Psoas muscle (tissue), 8 donors: ENCODE measurements at regions of chr10 and their contacts with region 1.

Region 1: GRCh38 chr10:62422068-62422590 is 48.0 kb downstream of the ZNF365 start:
- DNase-seq: no peak
- ATAC-seq: no peak
- H3K4me3 ChIP-seq: no peak overlapping the region
- H3K27ac ChIP-seq: no peak overlapping the region
- H3K4me1 ChIP-seq: no peaks in the 10 kb centered on the region
- H3K27me3 ChIP-seq: peaks cover 0 to 4% (median 0%) of the 10 kb centered on the region in 3 donors
- CTCF ChIP-seq: no peak

Region 2: DNA sequence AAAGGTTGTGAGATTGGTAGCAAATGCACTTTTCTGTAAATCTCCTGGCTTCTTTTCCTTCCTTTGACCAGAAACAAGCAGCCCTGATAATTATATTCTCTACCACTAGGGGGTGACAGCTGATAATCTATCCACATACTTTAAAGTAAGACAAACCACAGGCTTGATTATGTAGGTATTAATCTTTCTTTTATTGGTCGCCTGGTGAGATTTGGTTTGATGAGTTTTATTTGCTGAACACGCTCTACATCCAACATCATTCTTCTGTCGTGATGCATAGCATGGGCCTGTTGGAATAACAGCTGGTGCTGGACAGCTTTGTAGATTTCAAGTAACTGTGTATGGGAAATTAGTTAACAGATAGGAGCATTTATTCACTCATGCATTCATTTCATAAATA is 15.6 kb after region 1 on chr10:
- intact Hi-C with region 1: loop called in 1 of 2 experiments (anchors 2 kb)
- DNase-seq: no peak
- ATAC-seq: peak in 1 of 4 donors; percentile 74
- H3K4me3 ChIP-seq: no peak overlapping the region
- H3K27ac ChIP-seq: no peak overlapping the region
- H3K4me1 ChIP-seq: no peaks in the 10 kb centered on the region
- H3K27me3 ChIP-seq: no peaks in the 10 kb centered on the region
- CTCF ChIP-seq: peak; percentile 78

Region 3: GRCh38 chr10:62573929-62574328 is 151.8 kb after region 1 on chr10:
- intact Hi-C with region 1: no loop called
- DNase-seq: no peak
- ATAC-seq: no peak
- H3K4me3 ChIP-seq: no peak overlapping the region
- H3K27ac ChIP-seq: no peak overlapping the region
- H3K4me1 ChIP-seq: no peaks in the 10 kb centered on the region
- H3K27me3 ChIP-seq: peaks cover 0 to 2% (median 0%) of the 10 kb centered on the region in 3 donors
- CTCF ChIP-seq: no peak